ENCODE measurements at regions of chr14 and their contacts with region 1.

Region 1: DNA sequence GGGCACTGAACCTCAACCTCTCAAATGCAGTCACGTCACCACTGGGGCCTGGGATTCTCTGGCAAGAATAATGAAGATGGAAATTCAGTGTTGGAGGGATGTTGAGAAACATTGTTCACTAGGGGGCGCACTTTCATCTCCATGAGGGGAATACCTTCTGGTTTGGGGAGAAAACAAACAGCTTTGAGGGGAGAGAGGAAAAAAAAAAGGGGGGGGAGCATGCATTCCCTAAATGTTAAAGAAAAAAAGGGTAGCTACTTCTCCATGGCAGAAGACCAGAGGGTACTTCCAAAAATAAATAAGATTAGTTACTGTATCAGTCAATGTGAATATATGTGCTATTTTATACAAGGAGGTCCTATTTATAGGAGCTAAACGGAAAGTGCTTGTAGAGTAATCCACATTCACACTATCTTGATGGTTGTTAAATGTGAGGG is 5.8 kb upstream of the TBPL2 start:
- DNase-seq: peak; percentile 80
- H3K4me3 ChIP-seq: no peak overlapping the region
- H3K27ac ChIP-seq: no peak overlapping the region
- H3K4me1 ChIP-seq: peaks cover 39% of the 10 kb centered on the region
- H3K27me3 ChIP-seq: no peaks in the 10 kb centered on the region
- CTCF ChIP-seq: peak; percentile 58 to 65
- POLR2A ChIP-seq: no peak

Region 2: DNA sequence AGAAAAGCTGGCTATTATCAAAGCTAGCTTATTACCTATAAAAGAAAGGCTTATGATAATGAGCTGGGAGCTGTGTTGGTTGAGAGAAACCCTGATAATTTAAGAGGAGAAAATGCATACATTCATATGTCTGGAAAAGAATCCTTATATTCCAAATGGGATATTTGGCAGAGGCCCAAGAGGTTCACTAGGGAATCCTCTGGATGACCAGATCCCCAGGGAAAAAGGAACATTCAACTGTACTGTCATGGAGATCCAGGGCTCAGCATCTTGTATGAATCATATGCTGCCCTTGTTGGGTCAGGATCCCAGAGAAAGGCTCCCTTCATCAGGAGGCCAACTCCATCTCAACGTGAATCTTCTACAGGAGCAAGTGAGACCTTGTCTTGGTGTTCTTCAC is 191.7 kb before region 1 on chr14:
- CTCF ChIA-PET with region 1: no interaction called
- POLR2A ChIA-PET with region 1: no interaction called
- dilution Hi-C with region 1: no loop called
- intact Hi-C with region 1: no loop called
- DNase-seq: no peak
- H3K4me3 ChIP-seq: no peak overlapping the region
- H3K27ac ChIP-seq: no peak overlapping the region
- H3K4me1 ChIP-seq: no peaks in the 10 kb centered on the region
- H3K27me3 ChIP-seq: peaks cover 19 to 24% of the 10 kb centered on the region in 2 experiments
- CTCF ChIP-seq: no peak
- POLR2A ChIP-seq: no peak

Region 3: GRCh38 chr14:55514819-55515490 is 68.7 kb after region 1 on chr14:
- CTCF ChIA-PET with region 1: interaction called, 23 read pairs
- POLR2A ChIA-PET with region 1: no interaction called
- dilution Hi-C with region 1: no loop called
- intact Hi-C with region 1: loop called (anchors 1 kb)
- DNase-seq: peak; percentile 93
- H3K4me3 ChIP-seq: peak overlapping the region in 1 of 3 experiments; percentile 16
- H3K27ac ChIP-seq: peak overlapping the region; percentile 29
- H3K4me1 ChIP-seq: peaks cover 17% of the 10 kb centered on the region
- H3K27me3 ChIP-seq: no peaks in the 10 kb centered on the region
- CTCF ChIP-seq: no peak
- POLR2A ChIP-seq: no peak

Region 4: GRCh38 chr14:55579724-55580469 is 133.7 kb after region 1 on chr14 and contains the start of gene KTN1:
- CTCF ChIA-PET with region 1: interaction called, 34 read pairs
- POLR2A ChIA-PET with region 1: no interaction called
- dilution Hi-C with region 1: no loop called
- intact Hi-C with region 1: loop called (anchors 1 kb)
- DNase-seq: peak; percentile 76
- H3K4me3 ChIP-seq: peak within 1 kb of the TSS; percentile 62 to 87 (median 73)
- H3K27ac ChIP-seq: peak within 1 kb of the TSS; percentile 70
- H3K4me1 ChIP-seq: peaks cover 8% of the 10 kb centered on the region
- H3K27me3 ChIP-seq: no peaks in the 10 kb centered on the region
- CTCF ChIP-seq: no peak
- POLR2A ChIP-seq: peak; percentile 67
- total RNA-seq, gene KTN1: 135 and 148 TPM in 2 replicates

Region 5: DNA sequence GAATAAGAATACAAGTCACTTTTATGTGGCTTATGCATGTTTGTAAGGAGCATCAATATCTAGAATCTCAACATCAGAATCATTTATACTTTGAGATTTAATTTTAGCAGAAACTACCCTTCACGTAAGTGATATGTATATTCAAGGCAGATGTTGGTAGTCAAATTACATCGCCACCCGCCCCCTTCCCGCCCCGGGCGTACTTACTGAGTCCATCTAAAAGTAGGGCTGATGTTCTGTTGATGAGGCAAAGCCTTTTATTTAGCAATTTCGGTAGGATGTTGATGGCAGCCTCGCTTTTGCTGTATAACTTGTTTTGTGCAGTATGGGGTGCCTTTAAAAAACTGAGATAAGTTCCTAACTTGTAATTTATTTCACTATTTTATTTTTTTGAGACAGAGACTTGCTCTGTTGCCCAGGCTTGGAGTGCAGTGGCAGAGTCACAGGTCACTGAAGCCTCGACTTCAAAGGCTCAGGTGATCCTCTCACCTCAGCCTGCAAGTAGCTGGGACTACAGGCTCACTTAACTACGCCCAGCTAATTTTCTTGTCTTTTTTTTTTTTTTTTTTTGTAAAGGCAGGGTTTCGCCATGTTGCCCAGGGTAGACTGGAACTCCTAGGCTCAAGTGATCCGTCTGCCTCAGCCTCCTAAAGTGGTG is 164.6 kb after region 1 on chr14:
- CTCF ChIA-PET with region 1: interaction called, 14 read pairs
- POLR2A ChIA-PET with region 1: no interaction called
- dilution Hi-C with region 1: no loop called
- intact Hi-C with region 1: no loop called
- DNase-seq: no peak
- H3K4me3 ChIP-seq: no peak overlapping the region
- H3K27ac ChIP-seq: no peak overlapping the region
- H3K4me1 ChIP-seq: peaks cover 32% of the 10 kb centered on the region
- H3K27me3 ChIP-seq: no peaks in the 10 kb centered on the region
- CTCF ChIP-seq: no peak
- POLR2A ChIP-seq: no peak

Region 6: GRCh38 chr14:55665067-55665675 is 218.9 kb after region 1 on chr14:
- CTCF ChIA-PET with region 1: interaction called, 17 read pairs
- POLR2A ChIA-PET with region 1: no interaction called
- dilution Hi-C with region 1: no loop called
- intact Hi-C with region 1: loop called (anchors 5 kb)
- DNase-seq: no peak
- H3K4me3 ChIP-seq: no peak overlapping the region
- H3K27ac ChIP-seq: no peak overlapping the region
- H3K4me1 ChIP-seq: no peaks in the 10 kb centered on the region
- H3K27me3 ChIP-seq: no peaks in the 10 kb centered on the region
- CTCF ChIP-seq: no peak
- POLR2A ChIP-seq: no peak

Region 7: DNA sequence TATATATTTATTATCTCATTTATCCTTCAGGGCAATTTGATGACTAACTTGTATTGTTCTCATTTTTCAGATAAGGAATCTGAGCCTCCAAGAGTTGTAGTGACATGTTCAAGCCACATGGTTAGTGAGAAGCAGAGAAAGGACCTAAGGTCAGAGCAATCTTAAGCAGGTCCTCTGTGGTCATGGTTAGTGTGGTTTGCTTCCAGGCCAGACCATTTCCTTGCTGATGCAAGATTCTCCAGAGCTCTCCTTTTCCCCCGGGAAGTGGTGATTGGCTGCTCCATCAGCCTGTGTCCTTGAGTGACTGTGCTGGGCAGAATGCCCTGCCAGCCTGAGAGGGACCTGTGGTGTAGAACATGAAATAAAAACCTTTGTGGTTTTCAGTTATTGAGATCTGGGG is 275.1 kb after region 1 on chr14:
- CTCF ChIA-PET with region 1: no interaction called
- POLR2A ChIA-PET with region 1: no interaction called
- dilution Hi-C with region 1: no loop called
- intact Hi-C with region 1: loop called (anchors 5 kb)
- DNase-seq: peak; percentile 60
- H3K4me3 ChIP-seq: no peak overlapping the region
- H3K27ac ChIP-seq: no peak overlapping the region
- H3K4me1 ChIP-seq: peaks cover 9% of the 10 kb centered on the region
- H3K27me3 ChIP-seq: no peaks in the 10 kb centered on the region
- CTCF ChIP-seq: peak in 1 of 2 donors; percentile 2
- POLR2A ChIP-seq: no peak

Region 8: GRCh38 chr14:56474419-56475022 is 1028.3 kb after region 1 on chr14:
- CTCF ChIA-PET with region 1: interaction called, 196 read pairs
- POLR2A ChIA-PET with region 1: no interaction called
- dilution Hi-C with region 1: no loop called
- intact Hi-C with region 1: no loop called
- DNase-seq: peak; percentile 54
- H3K4me3 ChIP-seq: no peak overlapping the region
- H3K27ac ChIP-seq: no peak overlapping the region
- H3K4me1 ChIP-seq: no peaks in the 10 kb centered on the region
- H3K27me3 ChIP-seq: peaks cover 0 to 8% of the 10 kb centered on the region in 2 experiments
- CTCF ChIP-seq: peak; percentile 63 to 64
- POLR2A ChIP-seq: no peak